Activated T-helper 2 cell treated with anti-CD3 and anti-CD28 coated beads, Interferon-gamma antibody, Interleukin-2, Interleukin-4, amounts not matched to agents 10 μg/mL and 5 μg/mL and 100 μg/mL, durations not matched to agents 14 hours and 24 hours and 36 hours (primary cell): ENCODE measurements at regions of chr4 and their contacts with region 1.

Region 1: GRCh38 chr4:154982187-154983047 is 201.3 kb downstream of the RBM46 start:
- DNase-seq: no peak
- H3K4me3 Mint-ChIP-seq: no peak overlapping the region
- H3K27ac Mint-ChIP-seq: no peak overlapping the region
- H3K4me1 Mint-ChIP-seq: no peaks in the 10 kb centered on the region
- H3K27me3 Mint-ChIP-seq: no peaks in the 10 kb centered on the region

Region 2: GRCh38 chr4:155005395-155006090 is 23.1 kb after region 1 on chr4:
- intact Hi-C with region 1: no loop called
- DNase-seq: no peak
- H3K4me3 Mint-ChIP-seq: no peak overlapping the region
- H3K27ac Mint-ChIP-seq: no peak overlapping the region
- H3K4me1 Mint-ChIP-seq: peaks cover 2% of the 10 kb centered on the region
- H3K27me3 Mint-ChIP-seq: no peaks in the 10 kb centered on the region

Region 3: GRCh38 chr4:155371432-155372043 is 389.1 kb after region 1 on chr4:
- intact Hi-C with region 1: loop called (anchors 2 kb)
- DNase-seq: no peak
- H3K4me3 Mint-ChIP-seq: no peak overlapping the region
- H3K27ac Mint-ChIP-seq: no peak overlapping the region
- H3K4me1 Mint-ChIP-seq: peaks cover 13% of the 10 kb centered on the region
- H3K27me3 Mint-ChIP-seq: no peaks in the 10 kb centered on the region